Naive thymus-derived CD4-positive, alpha-beta T cell (primary cell): ENCODE measurements at regions of chr16 and their contacts with region 1.

Region 1: GRCh38 chr16:30657866-30658730 is at the start of gene FBRS:
- DNase-seq: peak; percentile 98 to 100 (median 100)
- ATAC-seq: peak; percentile 84
- H3K4me3 ChIP-seq: peak within 1 kb of the TSS; percentile 83
- H3K4me3 Mint-ChIP-seq: peak within 1 kb of the TSS; percentile 81 to 99 (median 96)
- H3K27ac ChIP-seq: peak within 1 kb of the TSS; percentile 94
- H3K27ac Mint-ChIP-seq: peak within 1 kb of the TSS; percentile 99 to 100 (median 100)
- H3K4me1 ChIP-seq: peaks cover 38 to 42% of the 10 kb centered on the region in 2 donors
- H3K4me1 Mint-ChIP-seq: peaks cover 19 to 50% (median 40%) of the 10 kb centered on the region in 7 donors
- H3K27me3 ChIP-seq: no peaks in the 10 kb centered on the region
- H3K27me3 Mint-ChIP-seq: no peaks in the 10 kb centered on the region
- total RNA-seq, gene FBRS: 143 to 174 (median 164) TPM

Region 2: DNA sequence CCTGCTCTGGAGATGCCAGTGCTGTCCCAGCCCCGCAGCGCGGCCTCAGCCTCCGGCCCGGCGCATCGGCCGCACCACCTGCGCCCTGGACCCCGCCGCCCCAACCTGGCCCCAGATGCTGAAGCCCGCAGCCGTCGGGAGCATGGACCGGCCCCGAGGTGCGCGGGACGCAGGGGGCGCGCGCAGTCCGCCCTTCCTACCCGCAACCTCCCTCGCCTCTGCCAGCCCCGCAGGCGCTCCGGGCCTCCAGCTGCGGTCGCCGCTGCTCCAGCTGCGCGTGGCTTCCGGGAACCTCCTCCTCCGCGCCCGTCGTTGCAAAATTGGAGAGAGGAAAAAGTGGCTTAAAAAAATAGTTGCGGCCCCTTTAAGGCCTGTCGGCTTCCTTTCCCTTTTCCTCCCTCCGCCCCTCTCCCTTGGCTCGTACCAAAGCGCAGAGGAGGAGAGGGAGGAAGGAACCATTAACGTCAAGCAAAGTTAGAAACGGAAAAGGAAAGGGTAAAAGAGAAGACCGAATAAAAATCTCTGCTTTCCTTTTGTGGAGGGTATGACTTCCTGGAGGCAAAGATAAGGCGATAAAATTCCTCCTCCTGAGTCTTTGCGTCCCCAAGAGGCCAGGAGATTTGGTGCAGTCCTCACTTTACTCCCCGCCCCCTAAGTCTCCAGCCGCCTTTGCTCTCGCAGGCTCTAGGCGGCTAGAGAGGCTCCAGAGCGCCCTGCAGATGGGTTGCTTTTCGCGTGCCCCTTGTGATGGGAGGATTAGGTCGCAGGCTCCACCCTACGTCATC is 795.0 kb before region 1 on chr16 and contains the start of gene CDIPT:
- CTCF ChIA-PET with region 1: no interaction called
- POLR2A ChIA-PET with region 1: no interaction called
- intact Hi-C with region 1: loop called in 1 of 2 experiments (anchors 1 kb)
- DNase-seq: peak; percentile 76 to 97 (median 93)
- ATAC-seq: peak; percentile 99
- H3K4me3 ChIP-seq: peak within 1 kb of the TSS; percentile 66
- H3K4me3 Mint-ChIP-seq: peak within 1 kb of the TSS; percentile 83 to 100 (median 96)
- H3K27ac ChIP-seq: peak within 1 kb of the TSS; percentile 90
- H3K27ac Mint-ChIP-seq: peak within 1 kb of the TSS; percentile 93 to 100 (median 99)
- H3K4me1 ChIP-seq: peaks cover 13 to 17% of the 10 kb centered on the region in 2 donors
- H3K4me1 Mint-ChIP-seq: peaks cover 12 to 35% (median 26%) of the 10 kb centered on the region in 7 donors
- H3K27me3 ChIP-seq: no peaks in the 10 kb centered on the region
- H3K27me3 Mint-ChIP-seq: peaks cover 0 to 3% (median 0%) of the 10 kb centered on the region in 5 donors
- total RNA-seq, gene CDIPT: 36.5 to 92.0 (median 69.9) TPM

Region 3: DNA sequence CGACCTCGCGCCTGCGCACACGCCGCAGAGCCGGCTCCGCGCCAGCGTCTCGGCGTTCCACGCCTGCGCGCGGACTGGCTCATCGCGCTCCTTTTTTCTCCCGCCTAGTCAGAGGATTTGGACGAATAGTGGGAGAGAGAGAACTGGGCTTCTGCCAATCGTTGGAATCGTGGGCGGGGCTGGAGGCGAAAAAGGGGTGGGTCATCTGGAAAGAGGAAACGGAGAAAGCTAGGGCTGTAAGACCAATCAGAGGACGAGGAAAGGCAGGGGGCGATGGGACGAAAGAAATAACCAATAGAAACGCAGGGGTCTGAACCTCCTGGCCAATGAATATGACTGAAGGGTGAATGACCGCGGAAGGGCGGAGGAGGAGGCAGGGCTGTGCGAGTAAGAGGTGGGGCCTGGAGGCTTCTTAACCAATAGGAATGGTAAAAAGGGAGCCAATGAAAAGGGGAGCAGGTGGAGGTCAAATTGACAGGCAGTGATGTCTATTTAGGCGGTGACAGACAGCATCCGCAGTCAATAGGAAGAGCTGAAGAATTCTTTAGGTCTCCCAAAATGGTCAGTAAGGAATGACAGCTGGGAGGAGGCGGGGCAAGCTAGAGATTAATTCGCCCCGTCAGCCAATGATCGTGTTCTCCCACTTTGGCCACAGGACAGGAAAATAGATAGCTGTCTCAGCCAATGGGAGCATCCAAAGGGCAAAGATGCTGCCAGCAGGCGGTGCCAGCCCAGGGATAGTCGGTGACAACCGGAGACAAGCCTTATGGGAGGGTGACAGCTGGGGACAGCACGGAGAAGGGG is 287.5 kb before region 1 on chr16 and contains the start of gene TBC1D10B:
- CTCF ChIA-PET with region 1: no interaction called
- POLR2A ChIA-PET with region 1: interaction called, 5 read pairs
- intact Hi-C with region 1: loop called in 1 of 2 experiments (anchors 2 kb)
- DNase-seq: peak; percentile 89 to 100 (median 100)
- ATAC-seq: peak; percentile 91
- H3K4me3 ChIP-seq: peak within 1 kb of the TSS; percentile 76
- H3K4me3 Mint-ChIP-seq: peak within 1 kb of the TSS; percentile 83 to 92 (median 89)
- H3K27ac ChIP-seq: peak within 1 kb of the TSS; percentile 80
- H3K27ac Mint-ChIP-seq: peak within 1 kb of the TSS; percentile 63 to 98 (median 93)
- H3K4me1 ChIP-seq: peaks cover 24 to 25% of the 10 kb centered on the region in 2 donors
- H3K4me1 Mint-ChIP-seq: peaks cover 42 to 54% (median 50%) of the 10 kb centered on the region in 7 donors
- H3K27me3 ChIP-seq: no peaks in the 10 kb centered on the region
- H3K27me3 Mint-ChIP-seq: peaks cover 0 to 3% (median 0%) of the 10 kb centered on the region in 5 donors
- total RNA-seq, gene TBC1D10B: 23.2 to 70.0 (median 45.2) TPM

Region 4: GRCh38 chr16:30534368-30535105 is 123.6 kb before region 1 on chr16 and contains the start of gene ZNF747:
- CTCF ChIA-PET with region 1: no interaction called
- POLR2A ChIA-PET with region 1: interaction called, 19 read pairs
- intact Hi-C with region 1: loop called (anchors 1 to 2 kb)
- DNase-seq: peak; percentile 84 to 92 (median 89)
- ATAC-seq: peak; percentile 87
- H3K4me3 ChIP-seq: peak within 1 kb of the TSS; percentile 60
- H3K4me3 Mint-ChIP-seq: peak within 1 kb of the TSS; percentile 91 to 100 (median 96)
- H3K27ac ChIP-seq: peak within 1 kb of the TSS; percentile 98
- H3K27ac Mint-ChIP-seq: peak within 1 kb of the TSS; percentile 94 to 99 (median 98)
- H3K4me1 ChIP-seq: peaks cover 8 to 13% of the 10 kb centered on the region in 2 donors
- H3K4me1 Mint-ChIP-seq: peaks cover 14 to 53% (median 43%) of the 10 kb centered on the region in 7 donors
- H3K27me3 ChIP-seq: no peaks in the 10 kb centered on the region
- H3K27me3 Mint-ChIP-seq: no peaks in the 10 kb centered on the region
- total RNA-seq, gene ZNF747: 9.1 to 17.4 (median 13.8) TPM

Region 5: GRCh38 chr16:30628627-30629540 is 29.2 kb before region 1 on chr16:
- CTCF ChIA-PET with region 1: interaction called, 6 read pairs
- POLR2A ChIA-PET with region 1: interaction called, 6 read pairs
- intact Hi-C with region 1: loop called (anchors 1 kb)
- DNase-seq: peak; percentile 64 to 89 (median 80)
- ATAC-seq: peak; percentile 97
- H3K4me3 ChIP-seq: peak overlapping the region; percentile 51
- H3K4me3 Mint-ChIP-seq: peak overlapping the region; percentile 58 to 85 (median 72)
- H3K27ac ChIP-seq: peak overlapping the region; percentile 60
- H3K27ac Mint-ChIP-seq: peak overlapping the region in 8 of 9 donors; percentile 58 to 89 (median 80)
- H3K4me1 ChIP-seq: peaks cover 0 to 3% of the 10 kb centered on the region in 2 donors
- H3K4me1 Mint-ChIP-seq: peaks cover 4 to 12% (median 8%) of the 10 kb centered on the region in 7 donors
- H3K27me3 ChIP-seq: no peaks in the 10 kb centered on the region
- H3K27me3 Mint-ChIP-seq: peaks cover 0 to under 1% (median 0%) of the 10 kb centered on the region in 5 donors

Region 6: DNA sequence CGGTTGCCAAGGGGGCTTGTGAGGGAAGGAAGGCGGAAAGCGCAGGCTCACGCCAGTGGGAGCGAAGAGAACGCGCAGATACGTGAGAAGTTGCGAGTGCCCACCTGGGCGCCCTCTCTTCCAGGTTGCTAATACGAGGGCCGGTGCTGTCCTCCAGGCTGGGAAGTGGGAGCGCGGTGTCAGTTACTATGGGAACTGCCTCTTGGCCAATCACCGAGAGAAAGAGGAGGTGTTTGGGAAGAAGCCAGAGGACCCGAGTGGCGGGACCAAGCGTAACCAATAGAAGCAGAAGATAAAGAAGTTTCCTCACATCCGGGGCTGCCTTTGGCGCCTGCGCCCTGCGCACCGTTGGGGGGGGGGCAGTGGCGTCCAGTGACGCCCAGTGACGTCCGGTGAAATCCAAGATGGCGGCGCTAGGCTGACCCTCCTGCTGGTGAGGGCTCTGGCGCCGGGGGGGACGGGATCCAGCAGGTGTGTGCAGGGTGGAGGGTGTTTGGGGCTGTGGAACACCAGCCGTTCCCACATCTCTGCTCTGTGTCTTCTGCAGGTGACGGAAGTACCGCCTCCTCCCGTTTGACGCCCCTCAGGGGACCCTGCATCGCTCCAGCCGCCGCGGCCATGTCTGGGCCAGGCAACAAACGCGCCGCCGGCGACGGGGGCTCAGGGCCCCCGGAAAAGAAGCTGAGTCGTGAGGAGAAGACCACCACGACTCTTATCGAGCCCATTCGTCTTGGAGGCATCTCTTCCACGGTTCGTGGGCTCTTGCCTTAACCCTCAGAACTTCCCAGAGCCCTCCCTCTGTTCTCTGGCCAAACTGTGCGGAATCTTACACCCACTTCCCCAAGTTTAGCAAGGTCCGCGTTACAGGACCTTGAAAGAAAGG is 104.1 kb after region 1 on chr16 and contains the starts of genes CFAP119 and RNF40:
- CTCF ChIA-PET with region 1: no interaction called
- POLR2A ChIA-PET with region 1: no interaction called
- intact Hi-C with region 1: loop called (anchors 1 to 5 kb)
- DNase-seq: peak; percentile 73 to 97 (median 88)
- ATAC-seq: peak; percentile 96
- H3K4me3 ChIP-seq: peak within 1 kb of the TSS; percentile 99
- H3K4me3 Mint-ChIP-seq: peak within 1 kb of the TSS; percentile 96 to 98 (median 97)
- H3K27ac ChIP-seq: peak within 1 kb of the TSS; percentile 88
- H3K27ac Mint-ChIP-seq: peak within 1 kb of the TSS; percentile 82 to 96 (median 93)
- H3K4me1 ChIP-seq: peaks cover 17 to 31% of the 10 kb centered on the region in 2 donors
- H3K4me1 Mint-ChIP-seq: peaks cover 21 to 41% (median 32%) of the 10 kb centered on the region in 7 donors
- H3K27me3 ChIP-seq: no peaks in the 10 kb centered on the region
- H3K27me3 Mint-ChIP-seq: no peaks in the 10 kb centered on the region
- total RNA-seq, gene CFAP119: 2.3 to 5.9 (median 2.9) TPM
- total RNA-seq, gene RNF40: 68.7 to 122 (median 114) TPM

Region 7: GRCh38 chr16:30837894-30838505 is 179.9 kb after region 1 on chr16:
- CTCF ChIA-PET with region 1: no interaction called
- POLR2A ChIA-PET with region 1: no interaction called
- intact Hi-C with region 1: no loop called
- DNase-seq: no peak
- ATAC-seq: no peak
- H3K4me3 ChIP-seq: no peak overlapping the region
- H3K4me3 Mint-ChIP-seq: no peak overlapping the region
- H3K27ac ChIP-seq: no peak overlapping the region
- H3K27ac Mint-ChIP-seq: no peak overlapping the region
- H3K4me1 ChIP-seq: no peaks in the 10 kb centered on the region
- H3K4me1 Mint-ChIP-seq: no peaks in the 10 kb centered on the region
- H3K27me3 ChIP-seq: no peaks in the 10 kb centered on the region
- H3K27me3 Mint-ChIP-seq: no peaks in the 10 kb centered on the region